Left cardiac atrium (tissue), 4 donors: ENCODE measurements at regions of chr13 and their contacts with region 1.

Region 1: DNA sequence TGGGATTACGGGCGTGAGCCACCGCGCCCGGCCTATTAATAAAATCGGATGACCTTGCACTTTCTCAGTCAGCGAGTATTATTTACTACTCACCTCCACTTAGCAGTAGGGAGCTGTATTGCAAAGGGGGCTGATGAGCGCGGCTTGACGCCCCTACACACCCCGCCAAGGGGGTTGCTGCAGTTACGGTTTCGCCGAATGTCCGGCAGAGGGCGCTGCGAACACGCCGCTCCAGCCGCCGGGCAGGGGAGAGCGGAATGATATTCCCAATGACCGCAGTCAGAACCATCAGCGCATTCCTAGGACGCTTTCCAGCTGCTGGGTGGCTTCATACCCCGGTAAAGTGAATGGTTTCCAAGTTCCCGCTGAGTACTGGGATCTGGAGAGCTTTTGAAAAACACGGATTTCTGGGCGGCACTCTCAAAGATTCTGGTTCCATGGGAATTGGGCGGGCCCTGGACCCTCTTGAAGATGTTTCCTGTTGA is 30.0 kb upstream of the TPT1 start:
- DNase-seq: peak; percentile 83
- ATAC-seq: peak; percentile 85 to 92

Region 2: GRCh38 chr13:45464687-45465453 is 93.9 kb after region 1 on chr13 and contains the start of gene COG3:
- intact Hi-C with region 1: loop called in 1 of 2 experiments (anchors 5 kb)
- DNase-seq: peak; percentile 96
- ATAC-seq: peak; percentile 99
- total RNA-seq, gene COG3: 11.7 to 18.6 TPM

Region 3: GRCh38 chr13:45487604-45488003 is 116.6 kb after region 1 on chr13:
- intact Hi-C with region 1: loop called in 1 of 2 experiments (anchors 5 kb)
- DNase-seq: no peak
- ATAC-seq: no peak